Caco-2 (cell line): ENCODE measurements at regions of chr6 and their contacts with region 1.

Region 1: DNA sequence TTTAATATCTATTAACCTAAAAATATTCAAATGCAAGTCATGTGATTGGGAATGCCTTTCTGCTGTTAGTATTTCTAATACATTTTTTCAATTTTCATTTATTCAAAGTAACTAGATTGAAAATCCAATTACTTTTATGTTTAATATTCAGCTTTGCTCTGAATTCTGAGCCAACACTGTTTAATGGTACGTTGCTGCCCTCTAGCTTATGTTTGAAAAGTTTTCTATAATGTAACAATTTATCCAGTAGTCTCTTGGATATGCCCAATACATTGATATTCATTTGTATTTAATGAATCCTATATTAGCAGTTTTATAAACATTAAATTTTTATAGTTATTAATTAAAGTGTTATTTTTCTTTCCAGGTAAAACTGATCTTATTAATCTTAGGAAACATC is 47.4 kb downstream of the LGSN start:
- DNase-seq: peak in 1 of 2 experiments; percentile 23
- H3K4me3 ChIP-seq: no peak overlapping the region
- H3K4me3 Mint-ChIP-seq: no peak overlapping the region
- H3K27ac Mint-ChIP-seq: no peak overlapping the region
- H3K4me1 ChIP-seq: no peaks in the 10 kb centered on the region
- H3K4me1 Mint-ChIP-seq: no peaks in the 10 kb centered on the region
- H3K27me3 ChIP-seq: no peaks in the 10 kb centered on the region
- H3K27me3 Mint-ChIP-seq: no peaks in the 10 kb centered on the region
- CTCF ChIP-seq: peak in 1 of 2 experiments; percentile 37

Region 2: GRCh38 chr6:63066055-63066704 is 206.2 kb before region 1 on chr6:
- CTCF ChIA-PET with region 1: interaction called, 5 read pairs
- POLR2A ChIA-PET with region 1: no interaction called
- intact Hi-C with region 1: loop called (anchors 1 kb)
- DNase-seq: peak in 1 of 2 experiments; percentile 25
- H3K4me3 ChIP-seq: no peak overlapping the region
- H3K4me3 Mint-ChIP-seq: no peak overlapping the region
- H3K27ac Mint-ChIP-seq: no peak overlapping the region
- H3K4me1 ChIP-seq: no peaks in the 10 kb centered on the region
- H3K4me1 Mint-ChIP-seq: no peaks in the 10 kb centered on the region
- H3K27me3 ChIP-seq: no peaks in the 10 kb centered on the region
- H3K27me3 Mint-ChIP-seq: no peaks in the 10 kb centered on the region
- CTCF ChIP-seq: peak in 1 of 2 experiments; percentile 36

Region 3: GRCh38 chr6:63121166-63121565 is 151.2 kb before region 1 on chr6:
- CTCF ChIA-PET with region 1: interaction called, 3 read pairs
- POLR2A ChIA-PET with region 1: no interaction called
- intact Hi-C with region 1: loop called (anchors 1 kb)
- DNase-seq: peak in 1 of 2 experiments; percentile 11
- H3K4me3 ChIP-seq: no peak overlapping the region
- H3K4me3 Mint-ChIP-seq: no peak overlapping the region
- H3K27ac Mint-ChIP-seq: no peak overlapping the region
- H3K4me1 ChIP-seq: no peaks in the 10 kb centered on the region
- H3K4me1 Mint-ChIP-seq: no peaks in the 10 kb centered on the region
- H3K27me3 ChIP-seq: no peaks in the 10 kb centered on the region
- H3K27me3 Mint-ChIP-seq: peaks cover 2% of the 10 kb centered on the region
- CTCF ChIP-seq: peak in 1 of 2 experiments; percentile 36